ENCODE measurements at regions of chr7 and their contacts with region 1.

Region 1: DNA sequence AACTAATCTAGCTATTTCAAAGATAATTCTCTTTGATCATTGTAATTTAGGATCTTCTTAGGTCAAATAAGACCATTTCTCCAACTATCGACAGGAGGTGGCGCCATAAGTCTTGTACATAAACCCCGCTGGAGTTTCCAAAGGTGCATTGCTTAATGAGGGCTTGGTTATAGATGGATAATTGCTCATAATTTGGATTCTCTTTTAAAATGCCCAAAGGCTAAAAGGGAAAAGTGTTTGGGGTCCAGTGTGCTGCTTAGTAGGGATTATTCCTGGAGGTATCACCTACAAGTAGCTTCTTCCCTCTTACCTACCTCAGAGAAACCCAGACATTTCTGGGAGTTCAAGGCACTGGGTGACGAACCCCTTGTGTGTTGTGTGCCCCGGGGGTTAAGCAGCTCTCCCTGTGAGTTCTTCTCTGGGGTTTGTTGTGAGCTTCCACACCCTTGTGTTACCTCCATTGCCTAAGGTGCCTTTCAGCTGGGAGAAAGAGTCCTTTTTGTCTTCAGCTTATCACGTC is 75.2 kb downstream of the PAXIP1 start:
- DNase-seq: peak; percentile 76 to 84 (median 77)
- H3K4me3 ChIP-seq: peak overlapping the region; percentile 74 to 89
- H3K4me3 Mint-ChIP-seq: peak overlapping the region; percentile 91 to 98 (median 94)
- H3K27ac ChIP-seq: peak overlapping the region; percentile 85
- H3K27ac Mint-ChIP-seq: peak overlapping the region; percentile 95 to 99 (median 98)
- H3K4me1 ChIP-seq: peaks cover 25% of the 10 kb centered on the region
- H3K4me1 Mint-ChIP-seq: peaks cover 22 to 42% (median 32%) of the 10 kb centered on the region in 4 donors
- H3K27me3 ChIP-seq: no peaks in the 10 kb centered on the region
- H3K27me3 Mint-ChIP-seq: no peaks in the 10 kb centered on the region

Region 2: GRCh38 chr7:154913638-154914312 is 13.9 kb before region 1 on chr7:
- CTCF ChIA-PET with region 1: interaction called, 72 read pairs
- POLR2A ChIA-PET with region 1: interaction called, 11 read pairs
- intact Hi-C with region 1: loop called (anchors 1 kb)
- DNase-seq: peak; percentile 80 to 83 (median 80)
- H3K4me3 ChIP-seq: peak overlapping the region in 1 of 2 donors; percentile 29
- H3K4me3 Mint-ChIP-seq: peak overlapping the region; percentile 84 to 93 (median 88)
- H3K27ac ChIP-seq: no peak overlapping the region
- H3K27ac Mint-ChIP-seq: peak overlapping the region in 3 of 7 donors; percentile 74 to 83 (median 75)
- H3K4me1 ChIP-seq: peaks cover 5% of the 10 kb centered on the region
- H3K4me1 Mint-ChIP-seq: peaks cover 4 to 5% (median 4%) of the 10 kb centered on the region in 4 donors
- H3K27me3 ChIP-seq: no peaks in the 10 kb centered on the region
- H3K27me3 Mint-ChIP-seq: peaks cover 14 to 27% of the 10 kb centered on the region in 2 donors

Region 3: GRCh38 chr7:155003376-155004214 is 75.9 kb after region 1 on chr7:
- CTCF ChIA-PET with region 1: interaction called, 72 read pairs
- POLR2A ChIA-PET with region 1: interaction called, 8 read pairs
- intact Hi-C with region 1: loop called (anchors 1 kb)
- DNase-seq: peak; percentile 80 to 92 (median 88)
- H3K4me3 ChIP-seq: peak overlapping the region; percentile 81 to 91
- H3K4me3 Mint-ChIP-seq: peak overlapping the region; percentile 93 to 97 (median 95)
- H3K27ac ChIP-seq: peak overlapping the region; percentile 84
- H3K27ac Mint-ChIP-seq: peak overlapping the region; percentile 38 to 96 (median 95)
- H3K4me1 ChIP-seq: peaks cover 19% of the 10 kb centered on the region
- H3K4me1 Mint-ChIP-seq: peaks cover 8 to 16% (median 12%) of the 10 kb centered on the region in 4 donors
- H3K27me3 ChIP-seq: no peaks in the 10 kb centered on the region
- H3K27me3 Mint-ChIP-seq: no peaks in the 10 kb centered on the region

Region 4: GRCh38 chr7:155205368-155206317 is 278.0 kb after region 1 on chr7:
- CTCF ChIA-PET with region 1: interaction called, 3 read pairs
- POLR2A ChIA-PET with region 1: interaction called, 13 read pairs
- intact Hi-C with region 1: loop called (anchors 1 kb)
- DNase-seq: peak; percentile 88 to 97 (median 90)
- H3K4me3 ChIP-seq: peak overlapping the region; percentile 66 to 89
- H3K4me3 Mint-ChIP-seq: peak overlapping the region; percentile 83 to 93 (median 88)
- H3K27ac ChIP-seq: peak overlapping the region; percentile 77
- H3K27ac Mint-ChIP-seq: peak overlapping the region; percentile 92 to 99 (median 96)
- H3K4me1 ChIP-seq: peaks cover 15% of the 10 kb centered on the region
- H3K4me1 Mint-ChIP-seq: peaks cover 15 to 27% (median 22%) of the 10 kb centered on the region in 4 donors
- H3K27me3 ChIP-seq: no peaks in the 10 kb centered on the region
- H3K27me3 Mint-ChIP-seq: no peaks in the 10 kb centered on the region

Region 5: DNA sequence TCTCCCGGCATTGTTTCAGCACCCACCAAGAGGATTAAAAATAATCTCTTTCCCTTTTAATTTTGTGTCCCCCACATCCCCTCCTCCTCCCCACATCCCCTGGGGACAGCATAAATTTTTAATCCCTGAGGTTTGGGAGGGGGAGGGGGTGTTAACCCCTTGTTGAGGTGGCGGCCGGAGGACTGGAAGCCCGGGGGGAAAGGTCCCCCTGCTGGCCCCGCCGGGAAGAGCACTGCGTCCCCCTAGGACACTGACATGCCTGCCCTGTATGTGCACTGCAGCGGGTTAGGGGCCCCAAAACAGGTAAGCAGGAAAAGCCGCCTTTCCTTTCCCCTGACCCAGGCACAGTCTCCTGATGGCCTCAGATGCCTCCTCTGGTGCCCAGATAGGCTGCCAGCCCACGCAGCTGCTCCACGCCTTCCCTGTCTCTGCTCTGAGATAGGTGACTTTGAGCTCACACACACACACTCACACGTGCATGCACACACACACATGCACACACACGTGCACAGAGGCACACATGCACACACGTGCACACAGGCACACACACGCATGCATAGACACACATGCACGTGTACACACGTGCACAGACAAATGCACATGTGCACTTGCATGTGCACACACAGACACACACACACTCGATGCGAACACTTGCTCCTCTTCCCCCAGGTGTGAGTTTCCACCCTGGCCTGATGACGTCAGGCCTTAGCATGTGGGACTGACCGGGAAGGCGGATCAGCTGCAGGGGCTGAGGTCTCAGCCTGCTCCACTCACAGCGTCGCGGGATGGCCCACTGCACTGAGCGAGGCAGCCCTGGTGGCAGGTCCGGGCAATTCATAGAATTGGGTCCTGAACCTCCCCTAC is 606.4 kb after region 1 on chr7:
- CTCF ChIA-PET with region 1: no interaction called
- POLR2A ChIA-PET with region 1: no interaction called
- intact Hi-C with region 1: loop called (anchors 5 kb)
- DNase-seq: no peak
- H3K4me3 ChIP-seq: no peak overlapping the region
- H3K4me3 Mint-ChIP-seq: peak overlapping the region; percentile 48 to 86 (median 75)
- H3K27ac ChIP-seq: no peak overlapping the region
- H3K27ac Mint-ChIP-seq: no peak overlapping the region
- H3K4me1 ChIP-seq: peaks cover 12% of the 10 kb centered on the region
- H3K4me1 Mint-ChIP-seq: peaks cover 9 to 23% (median 15%) of the 10 kb centered on the region in 4 donors
- H3K27me3 ChIP-seq: peaks cover 21% of the 10 kb centered on the region
- H3K27me3 Mint-ChIP-seq: peaks cover 51 to 55% of the 10 kb centered on the region in 2 donors

Region 6: GRCh38 chr7:155763691-155764437 is 836.2 kb after region 1 on chr7:
- CTCF ChIA-PET with region 1: interaction called, 4 read pairs
- POLR2A ChIA-PET with region 1: no interaction called
- intact Hi-C with region 1: loop called (anchors 1 kb)
- DNase-seq: peak; percentile 40 to 68 (median 60)
- H3K4me3 ChIP-seq: peak overlapping the region in 1 of 2 donors; percentile 11
- H3K4me3 Mint-ChIP-seq: peak overlapping the region; percentile 67 to 91 (median 77)
- H3K27ac ChIP-seq: peak overlapping the region; percentile 51
- H3K27ac Mint-ChIP-seq: peak overlapping the region; percentile 87 to 96 (median 93)
- H3K4me1 ChIP-seq: peaks cover 36% of the 10 kb centered on the region
- H3K4me1 Mint-ChIP-seq: peaks cover 33 to 66% (median 48%) of the 10 kb centered on the region in 4 donors
- H3K27me3 ChIP-seq: no peaks in the 10 kb centered on the region
- H3K27me3 Mint-ChIP-seq: no peaks in the 10 kb centered on the region

Region 7: GRCh38 chr7:156892821-156893706 is 1965.4 kb after region 1 on chr7 and contains the start of gene LMBR1:
- CTCF ChIA-PET with region 1: interaction called, 3 read pairs
- POLR2A ChIA-PET with region 1: no interaction called
- intact Hi-C with region 1: loop called (anchors 5 kb)
- DNase-seq: peak; percentile 93 to 96 (median 94)
- H3K4me3 ChIP-seq: peak within 1 kb of the TSS; percentile 67 to 80
- H3K4me3 Mint-ChIP-seq: peak within 1 kb of the TSS; percentile 90 to 96 (median 92)
- H3K27ac ChIP-seq: peak within 1 kb of the TSS; percentile 79
- H3K27ac Mint-ChIP-seq: peak within 1 kb of the TSS; percentile 92 to 97 (median 94)
- H3K4me1 ChIP-seq: peaks cover 31% of the 10 kb centered on the region
- H3K4me1 Mint-ChIP-seq: peaks cover 19 to 63% (median 37%) of the 10 kb centered on the region in 4 donors
- H3K27me3 ChIP-seq: no peaks in the 10 kb centered on the region
- H3K27me3 Mint-ChIP-seq: no peaks in the 10 kb centered on the region
- total RNA-seq, gene LMBR1: 73.9 to 97.4 TPM